Posterior cingulate gyrus (tissue), 11 donors: ENCODE measurements at regions of chr18 and their contacts with region 1.

Region 1: DNA sequence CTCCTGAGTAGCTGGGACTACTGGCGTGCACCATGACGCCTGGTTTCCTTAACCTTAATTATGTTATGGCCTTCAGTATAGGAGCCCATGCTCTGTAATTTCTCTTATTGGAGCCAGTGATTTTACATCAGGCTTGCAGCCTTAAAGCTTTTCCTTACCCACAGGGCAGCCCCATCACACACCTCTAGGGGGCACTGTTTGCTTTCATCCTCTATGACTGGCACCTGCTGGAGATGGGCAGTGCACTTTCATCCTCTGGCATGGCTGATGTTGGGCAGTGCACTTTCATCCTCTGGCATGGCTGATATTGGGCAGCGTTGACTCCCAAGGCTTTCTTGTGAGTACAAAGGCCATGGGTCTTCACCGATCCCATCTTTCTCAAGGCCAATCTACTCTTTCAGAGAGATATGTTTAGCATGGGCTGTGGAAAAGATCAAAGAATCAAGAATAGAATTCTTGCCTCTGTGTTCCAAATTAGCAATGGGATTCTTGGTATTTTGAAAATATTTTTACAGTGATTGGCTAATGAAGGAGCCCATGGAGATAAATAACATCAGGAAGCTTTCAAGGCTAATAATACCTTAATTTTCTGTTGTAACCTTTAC is 80.7 kb upstream of the MEX3C start:
- DNase-seq: peak in 8 of 10 donors; percentile 18 to 90 (median 64)

Region 2: DNA sequence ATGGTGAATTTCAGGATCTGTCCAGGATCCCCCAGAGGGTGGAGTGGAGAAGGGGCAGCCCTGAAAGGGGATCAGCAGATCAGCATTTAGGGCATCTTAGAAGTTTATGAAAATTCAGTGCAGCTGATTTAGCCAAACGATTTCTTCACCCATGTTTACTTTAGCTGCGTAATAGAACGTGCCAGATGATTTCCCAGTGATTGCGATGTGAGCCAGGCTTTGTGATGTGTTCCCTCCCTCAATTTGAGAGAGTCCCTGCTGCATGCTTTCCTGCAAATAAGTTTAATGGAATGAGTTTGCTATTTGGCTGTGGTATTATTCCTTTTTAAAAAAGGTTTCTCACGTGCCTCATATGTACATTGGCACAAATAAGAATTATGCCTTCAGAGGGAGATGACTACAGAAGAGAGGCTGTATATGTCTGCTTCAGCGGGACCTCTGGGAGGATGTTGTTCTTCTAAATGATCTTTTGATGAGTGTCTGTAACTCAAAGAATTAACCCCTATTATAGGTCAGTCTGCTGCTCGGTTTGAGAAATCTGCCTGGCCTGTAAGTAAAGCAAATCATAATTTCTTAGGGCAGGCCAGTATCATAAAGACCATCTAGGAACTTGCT is 570.2 kb before region 1 on chr18:
- intact Hi-C with region 1: no loop called
- DNase-seq: no peak

Region 3: GRCh38 chr18:51537487-51537886 is 259.3 kb after region 1 on chr18:
- intact Hi-C with region 1: loop called (anchors 2 kb)
- DNase-seq: peak; percentile 18 to 94 (median 53)